G401 (cell line): ENCODE measurements at regions of chr1 and their contacts with region 1.

Region 1: GRCh38 chr1:184212649-184213314 is 161.3 kb downstream of the TSEN15 start:
- DNase-seq: no peak

Region 2: GRCh38 chr1:184160236-184160635 is 52.5 kb before region 1 on chr1:
- in situ Hi-C with region 1: no loop called
- DNase-seq: no peak

Region 3: GRCh38 chr1:184379111-184379946 is 166.5 kb after region 1 on chr1:
- in situ Hi-C with region 1: no loop called
- DNase-seq: peak; percentile 17

Region 4: DNA sequence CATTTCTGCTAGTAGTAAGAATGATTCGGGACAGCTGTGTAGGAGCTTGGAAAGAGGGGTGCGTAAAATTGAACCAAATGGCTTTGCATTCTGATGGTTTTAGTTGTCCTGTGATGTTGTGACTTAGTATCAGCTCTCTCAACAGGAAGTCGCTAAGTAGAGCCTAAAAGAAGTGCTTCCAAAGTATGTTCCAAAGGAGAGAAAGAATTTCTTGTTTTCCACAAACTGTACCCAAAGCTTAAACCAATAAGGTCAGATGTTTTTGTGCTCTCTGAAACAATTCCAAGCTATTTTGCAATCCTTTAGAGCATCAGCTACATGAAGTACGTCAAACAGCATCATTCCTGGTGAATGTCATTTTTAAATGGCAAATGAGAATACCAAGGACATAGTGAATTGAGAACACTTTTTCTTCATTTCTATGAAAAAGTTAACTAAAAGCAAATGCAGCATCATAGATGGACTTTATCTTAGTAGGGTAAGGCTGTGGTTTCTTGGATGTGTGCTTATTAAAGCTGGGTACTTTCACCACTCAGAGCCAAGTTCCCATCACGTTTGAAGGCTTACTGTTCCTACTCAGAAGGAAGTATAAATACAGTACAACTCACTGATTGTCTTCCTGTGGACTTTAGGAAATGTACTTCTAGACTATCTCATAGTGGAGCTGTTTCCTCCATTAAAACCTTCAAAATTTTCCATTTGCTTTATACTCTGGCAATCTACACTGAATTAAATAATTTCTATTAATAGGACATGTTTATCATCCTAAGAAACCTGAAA is 322.6 kb after region 1 on chr1:
- in situ Hi-C with region 1: loop called (anchors 10 kb)
- DNase-seq: no peak